ENCODE measurements at regions of chr7 and their contacts with region 1.

Region 1: GRCh38 chr7:116525913-116526861 is 1.4 kb downstream of the CAV1 start:
- DNase-seq: no peak
- H3K4me3 ChIP-seq: peak overlapping the region; percentile 56 to 90 (median 75)
- H3K27ac ChIP-seq: peak overlapping the region; percentile 93 to 98 (median 95)
- H3K4me1 ChIP-seq: peaks cover 24 to 97% (median 31%) of the 10 kb centered on the region in 3 donors
- H3K27me3 ChIP-seq: peaks cover 0 to 16% (median 0%) of the 10 kb centered on the region in 4 donors
- CTCF ChIP-seq: peak; percentile 57 to 96 (median 94)
- POLR2A ChIP-seq: peak in 2 of 4 donors; percentile 69 to 77

Region 2: DNA sequence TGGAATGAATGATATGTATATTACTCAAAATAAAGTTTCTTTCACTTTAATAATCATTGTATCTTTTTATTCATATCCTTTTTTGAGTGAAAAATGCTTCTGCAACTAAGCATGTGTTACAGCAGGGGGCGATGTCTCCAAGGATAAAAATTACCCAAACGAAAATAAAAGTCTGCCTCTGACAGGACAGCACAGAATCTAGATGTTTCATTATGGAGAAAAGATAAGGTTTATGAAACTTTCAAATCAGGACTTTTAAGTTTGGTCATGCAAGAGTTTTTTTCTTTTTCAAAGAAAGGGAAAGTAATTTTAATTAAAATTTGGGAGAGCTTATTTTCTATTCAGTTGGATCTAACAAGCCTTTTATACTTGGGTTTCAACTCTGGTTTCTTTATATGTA is 267.5 kb before region 1 on chr7:
- intact Hi-C with region 1: loop called (anchors 5 kb)
- DNase-seq: no peak
- H3K4me3 ChIP-seq: no peak overlapping the region
- H3K27ac ChIP-seq: peak overlapping the region in 2 of 4 donors; percentile 19 to 49
- H3K4me1 ChIP-seq: peaks cover 0 to 22% (median 3%) of the 10 kb centered on the region in 3 donors
- H3K27me3 ChIP-seq: no peaks in the 10 kb centered on the region
- CTCF ChIP-seq: peak; percentile 69 to 94 (median 84)
- POLR2A ChIP-seq: no peak

Region 3: GRCh38 chr7:116316833-116317612 is 209.2 kb before region 1 on chr7:
- intact Hi-C with region 1: loop called (anchors 5 kb)
- DNase-seq: no peak
- H3K4me3 ChIP-seq: peak overlapping the region in 1 of 4 donors; percentile 34
- H3K27ac ChIP-seq: peak overlapping the region; percentile 77 to 87 (median 86)
- H3K4me1 ChIP-seq: peaks cover 13 to 38% (median 19%) of the 10 kb centered on the region in 3 donors
- H3K27me3 ChIP-seq: no peaks in the 10 kb centered on the region
- CTCF ChIP-seq: no peak
- POLR2A ChIP-seq: no peak

Region 4: DNA sequence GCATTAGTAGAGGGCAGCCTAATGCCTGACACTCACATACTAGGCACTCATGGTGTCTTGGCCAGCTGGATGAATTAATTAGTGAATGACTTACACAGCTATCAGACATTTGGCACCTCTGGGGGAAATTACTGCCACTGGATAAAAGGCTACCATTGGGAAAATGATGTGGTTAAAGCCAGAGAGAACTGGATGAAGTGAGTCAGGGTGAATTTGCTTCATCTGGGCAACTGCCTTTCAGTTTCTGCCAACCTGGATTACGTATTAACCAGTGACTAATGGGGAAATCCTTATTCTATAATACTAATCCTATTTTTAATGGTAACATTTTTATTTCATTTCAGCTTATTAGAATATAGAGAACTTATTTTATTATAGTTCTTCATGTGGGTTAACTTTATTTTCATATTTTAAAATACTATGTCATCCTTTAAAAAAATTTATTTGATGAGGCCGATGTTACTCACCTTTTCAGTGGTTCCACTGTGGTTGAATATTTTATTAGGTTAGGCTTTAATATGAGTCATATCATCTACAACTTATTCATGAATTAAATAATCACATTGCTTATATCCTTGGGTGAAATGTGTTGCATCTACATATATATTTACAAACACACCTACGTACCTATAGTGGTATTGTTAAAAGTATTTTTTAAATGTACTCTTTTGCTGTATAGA is 250.6 kb after region 1 on chr7:
- intact Hi-C with region 1: no loop called
- DNase-seq: no peak
- H3K4me3 ChIP-seq: no peak overlapping the region
- H3K27ac ChIP-seq: peak overlapping the region in 3 of 4 donors; percentile 6 to 31 (median 21)
- H3K4me1 ChIP-seq: peaks cover 0 to 38% (median 21%) of the 10 kb centered on the region in 3 donors
- H3K27me3 ChIP-seq: no peaks in the 10 kb centered on the region
- CTCF ChIP-seq: no peak
- POLR2A ChIP-seq: no peak